ENCODE measurements at regions of chr11 and their contacts with region 1.

Region 1: DNA sequence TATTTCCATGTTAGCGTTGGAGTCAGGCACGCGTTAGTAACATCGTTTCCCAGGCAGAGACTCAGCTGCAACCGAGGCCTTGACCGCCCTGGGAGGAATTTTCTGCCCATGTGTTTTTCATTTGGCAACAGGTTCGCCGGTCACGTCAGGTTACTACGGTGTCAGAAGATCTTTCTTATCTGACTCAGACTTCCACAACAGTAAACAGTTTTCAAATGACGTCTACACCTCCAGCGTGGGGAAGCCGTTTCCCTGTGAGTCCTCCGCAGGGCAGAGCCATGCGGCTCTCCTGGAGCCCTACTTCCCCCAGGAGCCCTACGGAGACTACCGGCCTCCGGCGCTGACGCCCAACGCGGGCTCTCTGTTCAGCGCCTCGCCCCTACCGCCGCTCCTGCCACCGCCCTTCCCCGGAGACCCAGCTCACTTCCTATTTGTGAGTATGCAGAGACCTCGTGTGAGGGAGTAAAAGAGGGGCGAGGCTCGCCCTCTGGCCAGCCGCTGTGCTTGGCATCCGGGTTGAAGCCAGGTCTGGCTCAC is 14.3 kb upstream of the POU2AF3 start:
- DNase-seq: no peak
- ATAC-seq: peak; percentile 55
- H3K4me3 Mint-ChIP-seq: no peak overlapping the region
- H3K27ac Mint-ChIP-seq: no peak overlapping the region
- H3K4me1 Mint-ChIP-seq: peaks cover 6% of the 10 kb centered on the region; the same call in 1 of the 2 replicates
- H3K27me3 Mint-ChIP-seq: no peaks in the 10 kb centered on the region
- CTCF ChIP-seq: no peak

Region 2: DNA sequence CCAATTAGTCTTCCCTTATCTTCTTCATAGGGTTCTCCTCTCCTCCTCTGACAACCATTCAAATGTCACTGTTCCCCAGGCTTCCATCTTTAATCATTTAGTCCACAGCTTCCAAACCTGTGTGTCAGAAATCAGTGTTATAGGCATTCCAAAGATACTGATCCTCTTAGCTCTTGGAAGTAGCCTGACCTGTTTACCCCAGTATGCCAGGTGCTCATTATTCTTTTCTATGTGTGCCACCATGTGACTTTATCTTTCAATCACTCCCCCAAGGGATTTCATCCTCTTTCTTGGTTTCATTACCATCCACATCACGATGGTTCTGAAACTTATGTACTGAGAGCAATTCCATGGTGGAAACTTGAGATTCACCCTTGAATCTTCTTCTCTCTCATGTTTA is 30.9 kb before region 1 on chr11:
- CTCF ChIA-PET with region 1: no interaction called
- POLR2A ChIA-PET with region 1: no interaction called
- DNase-seq: no peak
- ATAC-seq: no peak
- H3K4me3 Mint-ChIP-seq: no peak overlapping the region
- H3K27ac Mint-ChIP-seq: no peak overlapping the region
- H3K4me1 Mint-ChIP-seq: no peaks in the 10 kb centered on the region
- H3K27me3 Mint-ChIP-seq: no peaks in the 10 kb centered on the region
- CTCF ChIP-seq: no peak

Region 3: GRCh38 chr11:111384494-111384893 is 100.5 kb after region 1 on chr11:
- CTCF ChIA-PET with region 1: no interaction called
- POLR2A ChIA-PET with region 1: no interaction called
- DNase-seq: no peak
- ATAC-seq: no peak
- H3K4me3 Mint-ChIP-seq: no peak overlapping the region
- H3K27ac Mint-ChIP-seq: no peak overlapping the region
- H3K4me1 Mint-ChIP-seq: 0 out of 2 replicates have a peak, but pooled peaks cover 2% of the 10 kb centered on the region
- H3K27me3 Mint-ChIP-seq: no peaks in the 10 kb centered on the region
- CTCF ChIP-seq: no peak

Region 4: DNA sequence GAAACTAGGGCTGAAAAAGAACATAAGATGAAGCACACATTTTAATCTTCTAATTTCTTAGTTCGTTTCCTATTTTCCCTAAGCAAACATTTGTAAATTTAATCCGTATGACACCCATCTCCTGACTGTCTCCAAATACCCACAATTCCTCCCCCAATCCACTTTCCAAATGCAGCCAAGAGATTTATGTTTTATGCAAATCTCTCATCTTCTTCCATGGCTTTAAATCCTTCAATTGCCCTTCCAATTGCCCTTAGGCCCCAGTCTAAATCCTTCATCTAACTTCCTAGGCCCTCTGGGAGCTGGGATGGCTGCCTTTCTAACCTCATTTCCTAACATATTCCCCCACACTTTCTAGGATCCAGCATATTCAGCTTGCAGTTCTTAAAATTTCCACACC is 113.0 kb after region 1 on chr11:
- CTCF ChIA-PET with region 1: no interaction called
- POLR2A ChIA-PET with region 1: interaction called, 10 read pairs
- DNase-seq: no peak
- ATAC-seq: no peak
- H3K4me3 Mint-ChIP-seq: no peak overlapping the region
- H3K27ac Mint-ChIP-seq: no peak overlapping the region
- H3K4me1 Mint-ChIP-seq: no peaks in the 10 kb centered on the region
- H3K27me3 Mint-ChIP-seq: no peaks in the 10 kb centered on the region
- CTCF ChIP-seq: no peak

Region 5: DNA sequence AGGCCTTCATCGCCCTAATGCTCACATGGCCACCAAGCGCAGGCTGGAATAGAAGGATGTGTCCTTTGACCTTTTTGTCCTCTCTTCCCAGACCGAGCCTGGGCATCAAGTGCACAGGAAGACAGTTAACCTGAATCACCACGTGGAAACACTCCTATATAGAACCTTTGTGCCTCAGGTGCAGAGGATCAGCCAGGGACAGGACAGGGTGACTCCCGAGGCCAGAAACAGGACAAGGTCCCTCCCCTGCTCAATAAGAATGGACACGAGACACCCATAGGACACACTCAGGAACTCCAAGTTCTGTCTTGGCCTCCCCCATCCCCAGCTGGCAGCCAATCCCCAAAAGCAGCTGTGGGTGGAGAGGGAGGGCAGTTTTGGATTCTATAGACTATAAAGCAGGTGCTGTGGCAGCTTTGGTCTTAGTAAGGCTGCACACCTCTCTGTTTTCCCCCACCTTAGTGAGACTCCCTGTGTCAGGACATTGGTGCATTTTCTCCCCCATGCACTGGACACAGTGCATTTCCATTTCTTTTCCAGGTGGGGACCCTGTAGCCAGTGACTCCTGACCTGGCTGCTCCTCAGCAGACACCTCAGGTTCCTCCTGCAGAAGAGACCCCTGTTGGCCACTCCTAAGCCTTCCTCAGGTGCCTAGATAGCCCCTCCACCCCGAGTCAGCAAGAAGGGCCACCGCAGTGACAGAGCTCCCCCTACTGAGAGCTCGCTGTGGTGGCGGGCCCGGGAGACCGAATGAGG is 138.7 kb after region 1 on chr11:
- CTCF ChIA-PET with region 1: interaction called, 70 read pairs
- POLR2A ChIA-PET with region 1: interaction called, 4 read pairs
- DNase-seq: peak; percentile 87
- ATAC-seq: peak; percentile 100
- H3K4me3 Mint-ChIP-seq: no peak overlapping the region
- H3K27ac Mint-ChIP-seq: no peak overlapping the region
- H3K4me1 Mint-ChIP-seq: no peaks in the 10 kb centered on the region
- H3K27me3 Mint-ChIP-seq: no peaks in the 10 kb centered on the region
- CTCF ChIP-seq: peak; percentile 70

Region 6: DNA sequence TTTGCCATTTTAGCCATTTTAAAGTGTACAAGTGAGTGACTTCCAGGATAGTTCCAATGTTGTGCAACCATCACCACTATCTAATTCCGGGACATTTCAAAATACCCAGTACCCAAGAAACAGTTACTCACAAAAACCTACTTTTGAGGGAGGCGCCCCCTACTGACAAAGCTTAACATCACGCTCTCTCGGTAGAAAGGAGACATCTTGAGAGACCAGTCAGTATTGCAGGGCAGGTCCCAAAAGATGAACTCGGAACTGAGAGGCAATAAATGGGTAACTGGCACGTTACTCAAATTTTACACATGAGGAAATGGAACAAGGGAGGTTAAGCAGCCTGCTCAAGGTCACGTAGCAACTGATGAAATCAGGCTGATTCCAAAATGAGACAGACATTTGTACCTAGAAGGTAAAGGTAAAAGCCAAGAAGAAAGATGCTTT is 145.1 kb after region 1 on chr11:
- CTCF ChIA-PET with region 1: interaction called, 70 read pairs
- POLR2A ChIA-PET with region 1: no interaction called
- DNase-seq: peak; percentile 75
- ATAC-seq: peak; percentile 77
- H3K4me3 Mint-ChIP-seq: no peak overlapping the region
- H3K27ac Mint-ChIP-seq: no peak overlapping the region
- H3K4me1 Mint-ChIP-seq: peaks cover 20% of the 10 kb centered on the region
- H3K27me3 Mint-ChIP-seq: no peaks in the 10 kb centered on the region
- CTCF ChIP-seq: peak; percentile 77

Region 7: GRCh38 chr11:111446404-111447111 is 162.5 kb after region 1 on chr11:
- CTCF ChIA-PET with region 1: interaction called, 11 read pairs
- POLR2A ChIA-PET with region 1: no interaction called
- DNase-seq: peak; percentile 60
- ATAC-seq: peak; percentile 96
- H3K4me3 Mint-ChIP-seq: no peak overlapping the region
- H3K27ac Mint-ChIP-seq: no peak overlapping the region; the same call in 1 of the 2 replicates
- H3K4me1 Mint-ChIP-seq: peaks cover 22% of the 10 kb centered on the region
- H3K27me3 Mint-ChIP-seq: no peaks in the 10 kb centered on the region
- CTCF ChIP-seq: peak; percentile 70

Measured in WTC11 (cell line).